CD8-positive, alpha-beta T cell (primary cell): ENCODE measurements at regions of chr13 and their contacts with region 1.

Region 1: DNA sequence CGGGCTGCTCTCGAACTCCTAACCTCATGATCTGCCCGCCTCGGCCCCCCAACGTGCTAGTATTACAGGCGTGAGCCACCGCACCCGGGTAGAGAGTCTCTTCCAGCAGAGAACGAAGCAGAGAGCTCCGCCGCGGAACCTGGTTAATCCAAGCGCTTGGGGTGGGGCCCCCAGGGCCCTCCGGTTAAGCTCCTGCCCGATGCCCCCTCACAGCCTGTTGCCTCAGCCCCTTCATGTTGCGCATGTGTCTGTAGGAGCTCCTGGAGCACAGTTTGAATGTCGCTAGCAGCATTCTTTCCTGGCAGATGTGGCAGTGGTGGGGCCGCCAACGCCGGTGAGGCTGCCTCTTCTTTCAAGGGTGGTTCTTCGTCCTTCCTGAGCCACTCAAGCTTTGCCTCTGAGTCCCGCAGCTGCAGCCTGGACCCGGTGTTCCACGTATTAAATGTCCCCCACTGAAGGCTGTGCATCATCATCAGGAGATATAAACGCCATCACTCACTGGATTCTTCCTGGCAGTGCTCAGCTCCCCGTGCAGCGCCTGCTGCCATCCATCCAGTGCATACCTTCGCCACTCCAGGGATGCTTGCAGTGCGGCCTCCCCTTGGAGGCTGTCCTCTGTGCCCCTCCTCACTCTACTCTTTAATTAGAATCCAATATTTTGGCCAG is 1919.3 kb downstream of the PCDH9 start:
- DNase-seq: no peak
- ATAC-seq: no peak
- H3K4me3 ChIP-seq: no peak overlapping the region
- H3K4me3 Mint-ChIP-seq: no peak overlapping the region
- H3K27ac ChIP-seq: no peak overlapping the region
- H3K27ac Mint-ChIP-seq: no peak overlapping the region
- H3K4me1 ChIP-seq: no peaks in the 10 kb centered on the region
- H3K4me1 Mint-ChIP-seq: no peaks in the 10 kb centered on the region
- H3K27me3 ChIP-seq: no peaks in the 10 kb centered on the region
- H3K27me3 Mint-ChIP-seq: no peaks in the 10 kb centered on the region
- CTCF ChIP-seq: no peak

Region 2: GRCh38 chr13:64248371-64249065 is 1062.3 kb before region 1 on chr13:
- CTCF ChIA-PET with region 1: no interaction called
- POLR2A ChIA-PET with region 1: no interaction called
- intact Hi-C with region 1: no loop called
- DNase-seq: no peak
- ATAC-seq: no peak
- H3K4me3 ChIP-seq: no peak overlapping the region
- H3K4me3 Mint-ChIP-seq: no peak overlapping the region
- H3K27ac ChIP-seq: no peak overlapping the region
- H3K27ac Mint-ChIP-seq: no peak overlapping the region
- H3K4me1 ChIP-seq: no peaks in the 10 kb centered on the region
- H3K4me1 Mint-ChIP-seq: no peaks in the 10 kb centered on the region
- H3K27me3 ChIP-seq: no peaks in the 10 kb centered on the region
- H3K27me3 Mint-ChIP-seq: no peaks in the 10 kb centered on the region
- CTCF ChIP-seq: no peak

Region 3: DNA sequence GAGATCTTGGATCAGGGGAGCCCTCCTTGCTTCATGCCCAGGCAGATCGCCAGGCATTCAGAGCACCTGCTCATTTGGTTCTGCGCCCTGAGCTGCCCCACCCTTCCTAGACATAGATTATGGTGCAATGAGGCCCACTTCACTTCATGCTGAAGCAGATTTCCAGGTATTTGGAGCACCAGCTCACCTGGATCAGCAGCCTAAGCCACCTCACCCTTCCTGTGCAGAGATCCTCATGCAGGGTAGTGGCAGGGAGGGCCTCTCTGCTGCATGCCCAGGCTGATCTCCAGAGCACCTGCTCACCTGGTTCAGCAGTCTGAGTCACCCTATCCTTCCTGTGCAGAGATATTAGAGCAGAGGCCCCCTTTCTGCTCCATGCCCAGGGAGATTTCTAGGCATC is 46.7 kb before region 1 on chr13:
- CTCF ChIA-PET with region 1: no interaction called
- POLR2A ChIA-PET with region 1: no interaction called
- intact Hi-C with region 1: no loop called
- DNase-seq: no peak
- ATAC-seq: no peak
- H3K4me3 ChIP-seq: no peak overlapping the region
- H3K4me3 Mint-ChIP-seq: no peak overlapping the region
- H3K27ac ChIP-seq: no peak overlapping the region
- H3K27ac Mint-ChIP-seq: no peak overlapping the region
- H3K4me1 ChIP-seq: no peaks in the 10 kb centered on the region
- H3K4me1 Mint-ChIP-seq: no peaks in the 10 kb centered on the region
- H3K27me3 ChIP-seq: no peaks in the 10 kb centered on the region
- H3K27me3 Mint-ChIP-seq: no peaks in the 10 kb centered on the region
- CTCF ChIP-seq: no peak

Region 4: DNA sequence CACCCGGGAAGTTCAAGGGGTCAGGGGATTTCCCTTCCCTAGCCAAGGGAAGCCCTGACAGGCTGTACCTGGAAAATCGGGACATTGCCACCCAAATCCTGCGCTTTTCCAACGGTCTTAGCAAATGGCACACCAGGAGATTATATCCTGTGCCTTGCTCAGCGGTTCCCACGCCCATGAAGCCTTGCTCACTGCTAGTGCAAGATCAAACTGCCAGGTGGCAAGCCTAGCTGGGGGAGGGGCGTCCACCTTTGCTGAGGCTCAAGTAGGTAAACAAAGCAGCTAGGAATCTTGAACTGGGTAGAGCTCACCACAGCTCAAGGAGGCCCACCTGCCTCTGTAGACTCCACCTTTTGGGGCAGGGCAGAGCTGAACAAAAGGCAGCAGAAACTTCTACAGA is 124.8 kb after region 1 on chr13:
- CTCF ChIA-PET with region 1: no interaction called
- POLR2A ChIA-PET with region 1: no interaction called
- intact Hi-C with region 1: loop called in 1 of 2 experiments (anchors 5 kb)
- DNase-seq: no peak
- ATAC-seq: no peak
- H3K4me3 ChIP-seq: no peak overlapping the region
- H3K4me3 Mint-ChIP-seq: no peak overlapping the region
- H3K27ac ChIP-seq: no peak overlapping the region
- H3K27ac Mint-ChIP-seq: no peak overlapping the region
- H3K4me1 ChIP-seq: no peaks in the 10 kb centered on the region
- H3K4me1 Mint-ChIP-seq: no peaks in the 10 kb centered on the region
- H3K27me3 ChIP-seq: no peaks in the 10 kb centered on the region
- H3K27me3 Mint-ChIP-seq: no peaks in the 10 kb centered on the region
- CTCF ChIP-seq: no peak